Breast epithelium (tissue), 4 donors: ENCODE measurements at regions of chr13 and their contacts with region 1.

Region 1: DNA sequence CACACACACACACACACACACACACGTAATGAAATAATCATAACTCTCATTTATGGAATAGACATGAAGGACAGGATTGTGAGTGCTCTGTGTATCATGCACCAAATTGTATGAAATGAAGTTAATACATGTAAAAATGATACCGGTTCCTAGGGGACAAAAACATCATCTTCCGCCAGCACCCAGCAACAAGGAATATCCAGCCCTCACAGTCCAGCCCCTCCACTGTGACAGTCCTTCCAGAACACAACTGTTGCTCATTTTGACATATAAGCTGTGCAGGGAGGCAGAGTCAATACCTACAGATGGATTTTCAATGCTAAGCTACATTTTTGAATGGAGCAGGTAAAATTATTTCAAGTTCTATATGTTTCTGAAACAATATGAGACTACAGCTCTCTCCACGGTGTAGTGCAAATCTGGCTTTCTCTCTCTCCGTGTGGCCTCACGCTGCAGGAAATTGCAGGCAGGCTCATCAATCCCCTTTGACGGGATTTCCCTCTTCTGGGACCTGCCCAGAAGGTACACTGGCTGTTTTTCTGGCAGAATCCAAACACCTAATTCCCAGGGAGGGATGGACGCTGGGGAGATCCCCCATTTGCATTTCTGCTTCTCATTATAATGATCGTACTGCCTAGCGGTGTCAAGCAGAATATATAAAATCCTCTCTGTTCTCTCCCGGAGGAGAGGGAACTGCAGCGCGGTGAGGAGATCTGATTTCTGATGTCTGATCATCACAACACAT is 494.0 kb downstream of the LIG4 start:
- DNase-seq: no peak
- H3K4me3 ChIP-seq: no peak overlapping the region
- H3K27ac ChIP-seq: no peak overlapping the region
- H3K4me1 ChIP-seq: no peaks in the 10 kb centered on the region
- H3K27me3 ChIP-seq: no peaks in the 10 kb centered on the region
- CTCF ChIP-seq: no peak
- POLR2A ChIP-seq: no peak

Region 2: GRCh38 chr13:107675847-107676550 is 45.3 kb before region 1 on chr13:
- intact Hi-C with region 1: loop called (anchors 2 kb)
- DNase-seq: no peak
- H3K4me3 ChIP-seq: no peak overlapping the region
- H3K27ac ChIP-seq: no peak overlapping the region
- H3K4me1 ChIP-seq: no peaks in the 10 kb centered on the region
- H3K27me3 ChIP-seq: no peaks in the 10 kb centered on the region
- CTCF ChIP-seq: no peak
- POLR2A ChIP-seq: no peak